GM23248 (cell line): ENCODE measurements at regions of chr1 and their contacts with region 1.

Region 1: GRCh38 chr1:243748706-243749283 is 101.2 kb downstream of the AKT3 start:
- DNase-seq: peak; percentile 88
- H3K4me3 ChIP-seq: no peak overlapping the region
- H3K27ac ChIP-seq: peak overlapping the region; percentile 5; the same call in 1 of the 2 replicates
- H3K4me1 ChIP-seq: peaks cover 26% of the 10 kb centered on the region
- H3K27me3 ChIP-seq: no peaks in the 10 kb centered on the region

Region 2: DNA sequence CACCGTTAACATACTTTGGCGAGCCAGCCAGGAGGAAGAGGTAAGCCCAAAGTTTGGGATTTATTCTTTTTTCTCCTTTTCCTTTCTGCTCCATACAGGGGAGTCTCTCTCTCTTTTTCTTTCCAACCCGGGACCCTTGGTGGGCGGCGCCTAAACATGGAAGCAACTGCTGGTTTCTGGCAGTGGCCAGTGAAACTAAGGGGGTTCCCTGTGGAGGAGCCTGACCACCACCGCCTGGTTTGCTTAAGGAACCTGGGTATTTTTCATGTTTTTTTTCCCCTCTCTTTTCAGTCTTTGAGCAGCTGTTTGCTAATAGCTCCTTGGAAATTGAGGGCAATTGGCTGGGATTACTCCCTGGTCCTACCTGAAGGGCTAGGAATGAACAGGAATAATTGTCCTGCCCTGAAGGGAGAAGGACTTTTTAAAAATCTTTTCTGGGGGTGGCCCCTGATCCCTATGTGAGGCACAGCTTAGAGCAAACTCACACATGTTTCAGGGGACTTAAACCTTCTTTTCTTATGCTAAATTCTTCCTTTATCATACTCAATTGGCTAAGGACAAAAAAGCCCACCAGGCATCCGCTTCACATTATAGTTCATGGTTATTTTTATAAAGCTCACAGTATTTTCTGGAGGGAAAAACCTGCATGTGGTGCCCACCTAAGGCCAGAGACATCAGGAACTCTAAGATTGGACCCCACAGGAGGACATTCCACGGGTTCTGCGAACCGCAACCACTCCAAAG is 1163.0 kb before region 1 on chr1:
- in situ Hi-C with region 1: no loop called
- DNase-seq: no peak
- H3K4me3 ChIP-seq: no peak overlapping the region
- H3K27ac ChIP-seq: no peak overlapping the region
- H3K4me1 ChIP-seq: no peaks in the 10 kb centered on the region
- H3K27me3 ChIP-seq: no peaks in the 10 kb centered on the region

Region 3: DNA sequence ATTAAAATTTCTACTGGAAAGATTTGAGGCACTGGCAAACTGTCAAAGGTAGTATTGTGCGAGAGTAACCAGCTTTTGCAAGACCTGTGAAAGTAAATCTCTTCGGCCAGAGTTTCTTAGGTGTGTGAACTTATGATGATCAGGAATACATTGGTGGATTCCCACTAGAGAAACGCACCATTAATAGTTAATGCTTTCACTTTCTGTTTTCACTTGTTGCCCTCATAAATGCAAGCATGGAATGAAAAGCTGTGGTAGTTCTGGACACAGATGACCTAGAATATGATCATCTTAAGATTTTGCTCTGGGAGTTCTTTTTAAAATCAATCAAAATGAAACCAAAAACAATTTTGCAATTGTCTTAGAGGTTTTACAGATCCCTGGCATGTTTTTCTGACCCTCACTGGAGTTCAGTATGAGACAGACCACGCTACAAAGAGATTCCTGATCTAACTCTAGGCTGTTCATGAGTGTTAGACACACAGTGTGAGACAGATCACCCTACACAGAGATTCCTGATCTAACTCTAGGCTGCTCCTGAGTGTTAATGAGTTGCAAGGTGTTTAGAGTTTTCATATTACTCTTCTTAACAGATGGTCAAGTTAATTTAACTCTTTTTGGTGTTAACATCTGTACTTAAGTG is 394.2 kb before region 1 on chr1:
- in situ Hi-C with region 1: loop called (anchors 25 kb)
- DNase-seq: peak; percentile 38
- H3K4me3 ChIP-seq: peak overlapping the region; percentile 44
- H3K27ac ChIP-seq: no peak overlapping the region
- H3K4me1 ChIP-seq: peaks cover 11% of the 10 kb centered on the region; the same call in 1 of the 2 replicates
- H3K27me3 ChIP-seq: no peaks in the 10 kb centered on the region

Region 4: DNA sequence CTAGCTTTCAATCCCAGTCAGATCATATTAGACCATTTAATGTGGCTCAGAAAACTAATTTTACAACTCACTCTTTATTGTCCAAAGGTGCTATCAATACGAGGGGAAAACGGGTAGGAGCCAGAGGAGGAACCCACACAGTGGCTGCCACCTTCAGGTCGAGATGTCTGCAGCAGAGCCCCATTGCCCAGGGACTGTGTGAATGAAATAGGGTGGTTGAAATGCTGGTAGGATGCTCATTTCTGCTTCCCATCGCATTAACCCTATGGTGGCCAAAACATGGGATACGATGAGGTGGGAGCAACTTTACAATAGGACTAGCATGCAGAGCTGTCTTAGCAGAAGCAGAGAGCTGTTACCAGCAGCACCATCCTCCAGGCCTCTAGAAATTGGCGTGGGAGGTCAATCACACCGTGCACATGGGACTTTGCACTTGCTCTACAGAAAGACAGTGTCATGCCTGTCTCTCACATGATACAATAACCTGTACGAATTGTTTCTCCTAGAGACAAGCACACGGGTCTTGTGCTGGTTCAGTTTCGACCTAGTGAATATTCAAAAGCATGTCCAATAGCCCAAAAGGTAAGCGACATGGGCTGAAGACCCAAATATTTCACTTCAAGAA is 834.7 kb after region 1 on chr1:
- in situ Hi-C with region 1: no loop called
- DNase-seq: no peak
- H3K4me3 ChIP-seq: no peak overlapping the region
- H3K27ac ChIP-seq: no peak overlapping the region
- H3K4me1 ChIP-seq: no peaks in the 10 kb centered on the region
- H3K27me3 ChIP-seq: no peaks in the 10 kb centered on the region